Right cardiac atrium (tissue), 5 donors: ENCODE measurements at regions of chr6 and their contacts with region 1.

Region 1: DNA sequence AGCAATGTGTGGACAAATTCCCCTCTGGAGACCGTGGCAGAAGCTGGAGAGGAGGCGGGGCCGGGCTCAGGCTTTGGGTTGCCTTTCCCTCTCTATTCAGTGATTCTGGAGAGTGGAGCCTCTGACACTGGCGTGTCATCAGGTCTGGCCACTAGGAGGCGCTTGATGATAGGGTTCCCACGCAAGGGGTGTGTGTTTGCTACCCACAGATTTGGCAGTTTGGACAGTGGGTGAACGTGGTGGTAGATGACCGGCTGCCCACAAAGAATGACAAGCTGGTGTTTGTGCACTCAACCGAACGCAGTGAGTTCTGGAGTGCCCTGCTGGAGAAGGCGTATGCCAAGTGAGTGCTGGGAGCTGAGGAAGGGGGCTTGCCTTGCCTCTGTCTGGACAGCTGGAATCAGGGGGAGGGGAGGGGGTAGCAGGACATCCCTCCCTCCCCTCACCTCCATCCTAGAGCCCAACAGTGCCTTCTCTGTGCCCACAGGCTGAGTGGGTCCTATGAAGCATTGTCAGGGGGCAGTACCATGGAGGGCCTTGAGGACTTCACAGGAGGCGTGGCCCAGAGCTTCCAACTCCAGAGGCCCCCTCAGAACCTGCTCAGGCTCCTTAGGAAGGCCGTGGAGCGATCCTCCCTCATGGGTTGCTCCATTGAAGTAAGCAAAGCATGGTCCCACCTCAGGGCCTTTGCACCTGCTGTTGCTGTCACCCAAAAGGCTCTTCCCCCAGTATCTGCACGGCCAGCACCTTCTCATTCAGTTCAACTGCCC is 14.3 kb downstream of the CAPN11 start:
- DNase-seq: peak; percentile 88 to 96 (median 94)
- ATAC-seq: peak; percentile 90 to 92
- H3K4me3 ChIP-seq: no peak overlapping the region
- H3K27ac ChIP-seq: no peak overlapping the region
- H3K4me1 ChIP-seq: peaks cover 7% of the 10 kb centered on the region
- H3K27me3 ChIP-seq: no peaks in the 10 kb centered on the region

Region 2: DNA sequence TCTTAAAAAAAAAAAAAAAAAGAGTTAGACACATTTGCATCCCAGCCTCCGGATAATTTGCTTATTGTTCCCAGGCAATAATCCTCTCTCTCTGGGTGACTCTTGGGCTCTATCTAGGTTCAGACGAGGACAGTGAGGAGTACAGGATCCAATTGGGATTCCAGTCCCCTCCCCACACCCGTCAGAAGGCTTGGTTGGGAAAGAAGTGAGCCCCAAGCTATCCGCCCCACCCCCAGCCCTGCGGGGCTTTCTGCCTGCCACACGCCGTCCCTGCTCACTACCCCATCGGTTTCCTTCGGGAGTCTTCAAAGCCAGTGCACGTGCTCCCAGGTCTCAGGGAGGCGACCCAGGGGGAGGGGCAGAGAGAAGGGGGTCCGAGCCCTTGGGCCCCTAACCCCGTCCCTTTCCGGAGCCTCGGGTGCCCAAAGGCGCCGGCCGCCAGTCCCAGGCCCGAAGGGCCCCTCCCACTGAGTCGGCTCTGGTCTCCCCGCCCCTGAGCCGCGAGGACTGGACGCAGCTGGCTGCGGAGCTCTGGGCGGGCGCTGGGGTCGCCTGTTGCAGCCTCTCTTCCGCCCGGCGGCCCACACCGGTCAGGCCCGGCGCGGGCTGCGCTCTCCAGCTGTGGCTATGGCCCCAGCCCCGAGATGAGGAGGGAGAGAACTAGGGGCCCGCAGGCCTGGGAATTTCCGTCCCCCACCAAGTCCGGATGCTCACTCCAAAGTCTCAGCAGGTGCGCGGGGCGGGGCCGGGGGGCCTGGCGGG is 46.3 kb after region 1 on chr6:
- intact Hi-C with region 1: loop called in 1 of 4 experiments (anchors 5 kb)
- DNase-seq: peak; percentile 90 to 96 (median 95)
- ATAC-seq: peak; percentile 83
- H3K4me3 ChIP-seq: peak overlapping the region; percentile 88
- H3K27ac ChIP-seq: peak overlapping the region; percentile 98
- H3K4me1 ChIP-seq: peaks cover 18% of the 10 kb centered on the region
- H3K27me3 ChIP-seq: no peaks in the 10 kb centered on the region

Region 3: DNA sequence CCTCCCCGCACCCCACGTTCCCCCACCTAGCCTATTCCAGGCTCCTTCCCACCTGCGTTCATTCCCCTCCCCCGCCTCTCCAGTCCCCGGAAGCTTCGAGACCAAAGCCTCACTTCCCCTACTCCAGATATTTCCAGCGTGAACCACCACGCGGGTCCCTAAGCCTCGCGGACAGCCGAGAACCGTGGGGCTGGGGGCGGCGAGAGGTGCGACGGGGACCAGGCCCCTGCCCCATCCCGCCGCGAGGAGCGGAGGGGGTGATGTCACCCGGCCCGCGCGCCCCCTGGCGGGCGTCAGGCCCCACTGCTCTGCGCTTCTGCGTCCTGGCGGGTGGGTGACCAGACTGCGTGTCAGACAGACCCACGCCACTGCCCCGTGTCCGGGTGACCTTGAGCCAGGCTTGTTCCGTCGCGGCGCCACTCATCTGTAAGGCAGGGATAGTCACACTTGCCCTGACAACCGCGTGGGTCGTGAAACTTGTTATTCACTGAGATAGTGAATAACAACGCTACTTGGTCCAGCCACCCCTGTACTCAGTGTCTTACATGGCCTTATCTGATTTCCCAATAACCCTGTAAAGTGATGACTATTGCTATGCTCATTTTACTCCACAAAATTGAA is 65.0 kb after region 1 on chr6:
- intact Hi-C with region 1: loop called (anchors 5 kb)
- DNase-seq: peak; percentile 85 to 94 (median 93)
- ATAC-seq: peak; percentile 87 to 89
- H3K4me3 ChIP-seq: peak overlapping the region; percentile 54
- H3K27ac ChIP-seq: peak overlapping the region; percentile 97
- H3K4me1 ChIP-seq: peaks cover 13% of the 10 kb centered on the region
- H3K27me3 ChIP-seq: no peaks in the 10 kb centered on the region

Region 4: DNA sequence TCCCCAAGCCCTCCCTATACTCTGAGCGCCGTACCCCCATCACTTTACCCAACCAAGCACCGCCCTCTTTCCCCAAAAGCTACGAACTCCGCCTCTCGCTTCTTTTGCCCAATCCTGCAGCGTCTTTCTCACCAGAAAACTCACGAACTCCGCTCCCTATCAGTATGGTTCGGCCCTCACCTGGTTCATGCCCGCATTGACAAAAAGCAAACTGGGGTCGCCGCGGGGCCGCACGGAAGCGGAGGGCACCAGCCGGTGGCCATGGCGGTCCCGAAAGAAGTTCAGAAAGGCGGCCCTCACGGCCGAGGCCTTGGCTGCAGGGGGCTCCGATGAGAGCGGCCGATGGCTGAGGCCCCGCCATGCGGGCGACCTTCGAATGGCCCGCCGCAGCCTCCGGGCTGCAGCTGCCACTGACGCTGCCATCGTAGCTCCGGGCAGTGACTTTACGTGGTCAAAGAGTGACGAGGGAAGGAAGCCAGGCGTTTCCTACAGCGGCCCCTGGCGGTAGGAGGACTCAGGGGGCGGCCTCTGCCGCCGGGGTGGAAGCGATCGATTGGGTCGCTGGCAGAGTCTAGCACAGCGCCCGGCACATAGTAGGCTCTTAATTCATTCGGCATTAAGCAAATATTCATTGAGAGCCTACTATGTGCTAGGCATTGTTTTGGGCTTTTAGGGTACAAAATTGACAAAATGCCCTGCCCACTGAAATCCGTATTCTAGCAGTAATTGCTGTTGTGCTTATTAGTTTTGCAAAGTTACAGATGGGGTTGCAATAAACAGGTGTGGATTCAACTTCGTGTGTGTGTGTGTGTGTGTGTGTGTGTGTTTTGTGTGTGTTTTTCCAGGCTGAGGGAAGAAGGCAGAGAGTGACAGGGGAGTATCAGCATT is 140.2 kb after region 1 on chr6 and contains the start of gene AARS2:
- intact Hi-C with region 1: loop called in 1 of 4 experiments (anchors 10 kb)
- DNase-seq: peak; percentile 87 to 95 (median 94)
- ATAC-seq: peak; percentile 93 to 95
- H3K4me3 ChIP-seq: peak within 1 kb of the TSS; percentile 81
- H3K27ac ChIP-seq: peak within 1 kb of the TSS; percentile 57
- H3K4me1 ChIP-seq: peaks cover 3% of the 10 kb centered on the region
- H3K27me3 ChIP-seq: no peaks in the 10 kb centered on the region
- total RNA-seq, gene AARS2: 6.8 to 12.2 (median 9.3) TPM

Region 5: GRCh38 chr6:44338228-44339122 is 165.6 kb after region 1 on chr6:
- intact Hi-C with region 1: loop called in 1 of 4 experiments (anchors 10 kb)
- DNase-seq: peak; percentile 19 to 80 (median 73)
- ATAC-seq: peak; percentile 71 to 73
- H3K4me3 ChIP-seq: no peak overlapping the region
- H3K27ac ChIP-seq: no peak overlapping the region
- H3K4me1 ChIP-seq: no peaks in the 10 kb centered on the region
- H3K27me3 ChIP-seq: no peaks in the 10 kb centered on the region